T-cell (primary cell): ENCODE measurements at regions of chr18 and their contacts with region 1.

Region 1: DNA sequence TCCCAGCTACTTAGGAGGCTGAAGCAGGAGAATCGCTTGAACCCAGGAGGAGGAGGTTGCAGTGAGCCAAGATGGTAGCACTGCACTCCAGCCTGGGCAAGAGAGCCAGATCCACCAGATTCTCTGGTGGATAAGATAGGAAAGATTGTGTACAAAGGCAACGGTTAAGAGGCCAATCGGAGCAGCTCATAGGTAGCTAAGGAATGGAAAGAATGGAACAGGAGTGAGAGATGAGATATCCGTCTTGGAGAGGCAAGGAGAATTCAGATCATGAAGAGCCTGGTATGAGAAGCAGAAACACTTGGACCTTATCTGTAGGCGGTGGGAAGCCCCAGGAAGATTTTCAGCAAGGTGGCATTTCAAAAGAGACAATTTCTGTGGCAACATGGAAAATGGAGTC is 27.1 kb downstream of the TTR start:
- DNase-seq: no peak
- ATAC-seq: no peak
- H3K4me3 ChIP-seq: no peak overlapping the region
- H3K4me3 Mint-ChIP-seq: no peak overlapping the region
- H3K27ac ChIP-seq: no peak overlapping the region
- H3K27ac Mint-ChIP-seq: no peak overlapping the region
- H3K4me1 ChIP-seq: no peaks in the 10 kb centered on the region
- H3K4me1 Mint-ChIP-seq: no peaks in the 10 kb centered on the region
- H3K27me3 ChIP-seq: peaks cover 0 to 4% of the 10 kb centered on the region in 2 experiments
- H3K27me3 Mint-ChIP-seq: peaks cover 5 to 11% of the 10 kb centered on the region in 2 donors

Region 2: GRCh38 chr18:31438402-31438801 is 180.4 kb before region 1 on chr18:
- CTCF ChIA-PET with region 1: no interaction called
- POLR2A ChIA-PET with region 1: interaction called in 1 of 2 experiments, 10 read pairs
- DNase-seq: no peak
- ATAC-seq: no peak
- H3K4me3 ChIP-seq: no peak overlapping the region
- H3K4me3 Mint-ChIP-seq: no peak overlapping the region
- H3K27ac ChIP-seq: no peak overlapping the region
- H3K27ac Mint-ChIP-seq: no peak overlapping the region
- H3K4me1 ChIP-seq: no peaks in the 10 kb centered on the region
- H3K4me1 Mint-ChIP-seq: no peaks in the 10 kb centered on the region
- H3K27me3 ChIP-seq: no peaks in the 10 kb centered on the region
- H3K27me3 Mint-ChIP-seq: no peaks in the 10 kb centered on the region

Region 3: GRCh38 chr18:31634331-31634713 is 15.5 kb after region 1 on chr18:
- CTCF ChIA-PET with region 1: no interaction called
- POLR2A ChIA-PET with region 1: no interaction called
- DNase-seq: peak in 2 of 35 experiments; percentile 6 to 53
- ATAC-seq: peak in 2 of 4 experiments; percentile 36 to 44
- H3K4me3 ChIP-seq: no peak overlapping the region
- H3K4me3 Mint-ChIP-seq: no peak overlapping the region
- H3K27ac ChIP-seq: no peak overlapping the region
- H3K27ac Mint-ChIP-seq: no peak overlapping the region
- H3K4me1 ChIP-seq: peaks cover 6 to 16% of the 10 kb centered on the region in 2 experiments
- H3K4me1 Mint-ChIP-seq: peaks cover 6 to 17% (median 15%) of the 10 kb centered on the region in 3 donors
- H3K27me3 ChIP-seq: no peaks in the 10 kb centered on the region
- H3K27me3 Mint-ChIP-seq: peaks cover 0 to 14% of the 10 kb centered on the region in 2 donors